Activated B cell treated with CpG ODN at 0.5 μM for 24 hours (primary cell): ENCODE measurements at regions of chr3 and their contacts with region 1.

Region 1: GRCh38 chr3:57597122-57597923 is at the start of gene ARF4:
- DNase-seq: peak; percentile 100
- ATAC-seq: peak; percentile 89
- H3K4me3 Mint-ChIP-seq: peak within 1 kb of the TSS; percentile 95
- H3K27ac Mint-ChIP-seq: peak within 1 kb of the TSS; percentile 100
- H3K4me1 Mint-ChIP-seq: peaks cover 53% of the 10 kb centered on the region
- H3K27me3 Mint-ChIP-seq: no peaks in the 10 kb centered on the region
- CTCF ChIP-seq: no peak
- total RNA-seq, gene ARF4: 43.0 and 45.1 TPM in 2 replicates

Region 2: GRCh38 chr3:56556908-56557830 is 1040.2 kb before region 1 on chr3 and contains the start of gene CCDC66:
- CTCF ChIA-PET with region 1: no interaction called
- POLR2A ChIA-PET with region 1: interaction called, 5 read pairs
- intact Hi-C with region 1: loop called (anchors 10 kb)
- DNase-seq: peak; percentile 84
- ATAC-seq: peak; percentile 98
- H3K4me3 Mint-ChIP-seq: peak within 1 kb of the TSS; percentile 98
- H3K27ac Mint-ChIP-seq: peak within 1 kb of the TSS; percentile 97
- H3K4me1 Mint-ChIP-seq: peaks cover 20% of the 10 kb centered on the region
- H3K27me3 Mint-ChIP-seq: no peaks in the 10 kb centered on the region
- CTCF ChIP-seq: no peak
- total RNA-seq, gene CCDC66: 29.1 and 34.9 TPM in 2 replicates

Region 3: DNA sequence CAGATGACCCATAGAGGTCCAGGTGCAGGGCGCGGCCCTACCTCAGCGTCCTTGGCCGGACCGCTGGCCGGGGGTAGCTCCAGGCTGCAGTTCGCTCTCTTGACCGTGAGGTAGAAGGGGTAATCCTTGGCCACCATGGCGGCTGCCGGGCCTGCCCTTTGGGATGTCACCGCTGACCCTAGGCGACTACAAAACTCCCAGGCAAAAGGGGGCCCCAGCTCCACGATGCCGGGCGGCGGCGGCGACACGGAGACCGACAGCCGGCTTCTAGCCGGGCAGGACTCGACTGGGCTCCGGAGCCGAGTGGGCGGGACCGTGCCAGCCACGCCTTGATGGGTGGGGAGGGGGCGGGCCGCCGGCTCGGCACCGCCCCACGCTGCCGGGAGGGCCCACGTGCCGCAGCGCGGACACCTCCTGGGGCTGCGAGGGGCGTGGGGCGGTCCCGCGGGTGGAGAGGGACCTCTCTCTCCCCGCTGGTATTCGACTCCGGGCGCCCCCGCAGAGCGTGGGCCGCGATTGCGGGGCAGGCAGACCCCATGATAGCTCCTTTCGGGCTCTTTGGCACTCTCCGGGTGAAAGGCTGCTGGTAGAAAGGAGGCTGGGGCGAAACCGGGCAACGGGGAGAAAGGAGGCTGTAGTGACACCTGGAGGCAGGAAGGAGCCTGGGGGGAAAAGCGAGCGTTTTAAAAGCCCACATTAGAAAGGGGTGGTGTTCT is 795.5 kb before region 1 on chr3 and contains the start of gene ARHGEF3:
- CTCF ChIA-PET with region 1: no interaction called
- POLR2A ChIA-PET with region 1: no interaction called
- intact Hi-C with region 1: loop called (anchors 10 kb)
- DNase-seq: peak; percentile 84
- ATAC-seq: peak; percentile 91
- H3K4me3 Mint-ChIP-seq: peak within 1 kb of the TSS; percentile 95
- H3K27ac Mint-ChIP-seq: peak within 1 kb of the TSS; percentile 87
- H3K4me1 Mint-ChIP-seq: peaks cover 49% of the 10 kb centered on the region
- H3K27me3 Mint-ChIP-seq: no peaks in the 10 kb centered on the region
- CTCF ChIP-seq: peak; percentile 32
- total RNA-seq, gene ARHGEF3: 22.1 and 27.0 TPM in 2 replicates

Region 4: DNA sequence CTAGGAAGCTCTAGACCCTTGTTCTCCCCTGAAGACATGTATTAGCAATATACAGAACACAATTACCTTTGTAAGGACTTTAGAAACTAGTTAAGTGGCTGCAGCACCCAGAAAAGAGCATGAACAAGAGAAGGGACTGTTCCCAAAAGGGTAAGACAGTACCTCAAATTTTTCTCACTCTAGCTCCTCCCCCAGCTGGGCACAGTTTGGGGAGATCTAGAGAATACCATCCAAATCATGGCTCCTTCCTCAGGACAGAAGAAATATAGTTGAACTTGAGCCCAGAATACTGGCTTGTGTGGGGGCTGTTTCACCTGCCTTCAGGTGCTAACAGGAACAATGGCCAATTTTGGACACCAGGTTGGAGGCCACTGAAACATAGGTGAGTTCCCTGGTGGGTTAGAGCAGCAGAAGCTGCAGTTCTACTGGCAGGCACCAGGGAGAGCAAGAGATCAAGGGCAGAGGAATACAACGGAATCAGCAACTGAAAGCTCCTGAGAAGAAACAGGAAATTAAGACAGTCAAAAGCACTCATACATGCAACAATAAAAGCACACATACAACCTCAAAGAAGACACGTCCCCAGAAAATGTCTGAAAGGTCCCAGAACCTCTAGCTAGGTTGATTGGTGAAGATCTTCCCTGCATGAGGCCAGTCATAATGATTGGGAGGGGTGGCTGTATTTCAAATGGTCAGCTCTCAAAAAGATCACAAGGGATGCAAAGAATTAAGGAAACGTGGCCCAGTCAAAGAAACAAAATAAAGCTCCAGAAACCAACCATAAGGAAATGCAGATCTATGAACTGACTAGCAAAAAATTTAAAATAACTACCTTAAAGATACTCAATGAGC is 199.9 kb before region 1 on chr3:
- CTCF ChIA-PET with region 1: no interaction called
- POLR2A ChIA-PET with region 1: no interaction called
- intact Hi-C with region 1: loop called (anchors 5 kb)
- DNase-seq: peak; percentile 17
- ATAC-seq: peak; percentile 98
- H3K4me3 Mint-ChIP-seq: no peak overlapping the region
- H3K27ac Mint-ChIP-seq: peak overlapping the region; percentile 43
- H3K4me1 Mint-ChIP-seq: peaks cover 16% of the 10 kb centered on the region
- H3K27me3 Mint-ChIP-seq: peaks cover 3% of the 10 kb centered on the region
- CTCF ChIP-seq: peak; percentile 79

Region 5: DNA sequence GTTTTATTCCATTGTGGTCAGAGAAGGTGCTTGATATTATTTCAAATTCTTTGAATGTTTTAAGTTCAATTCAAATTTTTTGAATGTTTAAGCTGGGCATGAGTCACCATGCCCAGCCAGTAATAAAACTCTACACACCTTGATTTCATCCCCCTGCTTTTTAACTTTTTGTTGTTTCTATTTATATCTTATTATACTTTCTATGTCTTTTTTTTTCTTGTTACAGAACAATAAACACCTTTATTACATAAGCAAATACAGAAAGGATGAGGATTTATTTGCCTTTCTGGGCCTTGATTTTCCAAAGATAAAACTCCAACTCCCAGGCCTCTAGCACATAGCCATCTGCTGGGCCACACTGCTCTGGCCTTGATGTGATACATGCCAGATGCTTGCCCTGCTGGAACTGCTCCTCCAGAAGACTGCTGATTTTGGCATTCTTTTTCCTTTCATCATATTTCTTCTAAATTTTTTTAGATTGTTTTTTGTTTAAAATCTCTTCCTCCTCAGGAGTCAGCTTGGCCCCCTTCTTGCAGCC is 67.2 kb before region 1 on chr3:
- CTCF ChIA-PET with region 1: no interaction called
- POLR2A ChIA-PET with region 1: no interaction called
- intact Hi-C with region 1: no loop called
- DNase-seq: no peak
- ATAC-seq: no peak
- H3K4me3 Mint-ChIP-seq: no peak overlapping the region
- H3K27ac Mint-ChIP-seq: no peak overlapping the region
- H3K4me1 Mint-ChIP-seq: no peaks in the 10 kb centered on the region
- H3K27me3 Mint-ChIP-seq: no peaks in the 10 kb centered on the region
- CTCF ChIP-seq: no peak

Region 6: GRCh38 chr3:57675530-57675929 is 78.2 kb after region 1 on chr3:
- CTCF ChIA-PET with region 1: no interaction called
- POLR2A ChIA-PET with region 1: interaction called, 13 read pairs
- intact Hi-C with region 1: loop called (anchors 1 kb)
- DNase-seq: no peak
- ATAC-seq: peak; percentile 25
- H3K4me3 Mint-ChIP-seq: no peak overlapping the region
- H3K27ac Mint-ChIP-seq: peak overlapping the region; percentile 82
- H3K4me1 Mint-ChIP-seq: peaks cover 49% of the 10 kb centered on the region
- H3K27me3 Mint-ChIP-seq: no peaks in the 10 kb centered on the region
- CTCF ChIP-seq: no peak

Region 7: GRCh38 chr3:57787867-57788623 is 190.7 kb after region 1 on chr3:
- CTCF ChIA-PET with region 1: no interaction called
- POLR2A ChIA-PET with region 1: no interaction called
- intact Hi-C with region 1: loop called (anchors 1 kb)
- DNase-seq: no peak
- ATAC-seq: peak; percentile 91
- H3K4me3 Mint-ChIP-seq: no peak overlapping the region
- H3K27ac Mint-ChIP-seq: no peak overlapping the region
- H3K4me1 Mint-ChIP-seq: peaks cover 23% of the 10 kb centered on the region
- H3K27me3 Mint-ChIP-seq: no peaks in the 10 kb centered on the region
- CTCF ChIP-seq: no peak